CD4-positive, alpha-beta T cell (primary cell): ENCODE measurements at regions of chr22 and their contacts with region 1.

Region 1: GRCh38 chr22:36352803-36353507 is 34.8 kb downstream of the MYH9 start:
- DNase-seq: peak in 5 of 14 experiments; percentile 39 to 67 (median 61)
- ATAC-seq: peak; percentile 48
- H3K4me3 ChIP-seq: peak overlapping the region; percentile 16
- H3K4me3 Mint-ChIP-seq: peak overlapping the region; percentile 75
- H3K27ac ChIP-seq: peak overlapping the region; percentile 59 to 71
- H3K27ac Mint-ChIP-seq: peak overlapping the region; percentile 93
- H3K4me1 ChIP-seq: peaks cover 98% of the 10 kb centered on the region
- H3K4me1 Mint-ChIP-seq: peaks cover 91% of the 10 kb centered on the region
- H3K27me3 ChIP-seq: no peaks in the 10 kb centered on the region
- H3K27me3 Mint-ChIP-seq: no peaks in the 10 kb centered on the region
- CTCF ChIP-seq: no peak

Region 2: GRCh38 chr22:36369922-36370791 is 17.2 kb after region 1 on chr22:
- CTCF ChIA-PET with region 1: interaction called, 5 read pairs
- POLR2A ChIA-PET with region 1: interaction called, 1,847 read pairs
- intact Hi-C with region 1: loop called in 1 of 2 experiments (anchors 2 kb)
- DNase-seq: peak in 4 of 14 experiments; percentile 38 to 65 (median 62)
- ATAC-seq: peak; percentile 39
- H3K4me3 ChIP-seq: peak overlapping the region; percentile 39
- H3K4me3 Mint-ChIP-seq: peak overlapping the region; percentile 90
- H3K27ac ChIP-seq: peak overlapping the region; percentile 63 to 87
- H3K27ac Mint-ChIP-seq: peak overlapping the region; percentile 93
- H3K4me1 ChIP-seq: peaks cover 99% of the 10 kb centered on the region
- H3K4me1 Mint-ChIP-seq: peaks cover 94% of the 10 kb centered on the region
- H3K27me3 ChIP-seq: no peaks in the 10 kb centered on the region
- H3K27me3 Mint-ChIP-seq: no peaks in the 10 kb centered on the region
- CTCF ChIP-seq: no peak